PC-9 (cell line): ENCODE measurements at regions of chr2 and their contacts with region 1.

Region 1: GRCh38 chr2:208407667-208408066 is 1.1 kb downstream of the PTH2R start:
- DNase-seq: no peak
- H3K4me3 ChIP-seq: no peak overlapping the region
- H3K27ac ChIP-seq: no peak overlapping the region
- H3K4me1 ChIP-seq: no peaks in the 10 kb centered on the region
- H3K27me3 ChIP-seq: no peaks in the 10 kb centered on the region
- CTCF ChIP-seq: peak; percentile 56

Region 2: GRCh38 chr2:209411718-209412117 is 1004.1 kb after region 1 on chr2:
- CTCF ChIA-PET with region 1: no interaction called
- POLR2A ChIA-PET with region 1: no interaction called
- intact Hi-C with region 1: loop called (anchors 10 kb)
- DNase-seq: no peak
- H3K4me3 ChIP-seq: no peak overlapping the region
- H3K27ac ChIP-seq: no peak overlapping the region
- H3K4me1 ChIP-seq: no peaks in the 10 kb centered on the region
- H3K27me3 ChIP-seq: no peaks in the 10 kb centered on the region
- CTCF ChIP-seq: no peak